ENCODE measurements at regions of chrX and their contacts with region 1.

Region 1: DNA sequence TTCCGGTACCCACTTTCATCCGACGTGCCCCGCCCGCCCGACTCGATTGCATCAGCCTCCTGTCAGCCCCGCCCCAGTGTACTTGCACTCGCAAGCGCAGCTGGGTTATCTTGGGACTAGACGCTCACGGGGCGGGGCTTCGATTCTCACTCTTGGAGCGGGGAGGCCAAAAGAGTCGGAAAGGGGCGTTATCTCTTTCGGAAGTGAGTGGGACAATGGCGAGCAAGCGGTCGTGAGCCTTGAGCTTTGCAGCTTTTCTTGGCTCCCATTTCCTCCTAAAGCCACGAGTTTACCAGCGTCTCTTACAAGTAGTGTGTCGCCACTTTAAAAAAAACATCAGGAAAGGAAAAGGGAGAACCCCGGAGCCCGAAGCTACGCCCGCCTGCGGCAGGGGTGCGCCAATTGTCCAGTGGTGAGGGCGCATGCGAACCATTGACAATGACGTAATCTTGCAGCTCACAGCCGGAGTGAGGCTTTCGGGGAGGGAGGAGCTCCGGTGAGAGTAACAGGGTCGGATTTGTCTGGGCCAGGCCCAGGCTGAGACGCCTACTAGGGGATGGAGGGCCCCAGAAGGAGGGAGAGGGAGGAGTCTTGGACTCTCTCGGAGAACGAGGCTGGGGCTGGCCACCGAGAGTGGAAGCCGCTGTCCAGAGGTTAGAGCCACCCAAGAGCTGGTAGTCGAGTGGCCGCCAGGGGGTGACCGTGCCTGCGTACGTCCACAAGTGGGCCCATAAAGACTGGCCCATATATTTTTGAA is 109.5 kb downstream of the GNL3L start:
- DNase-seq: peak; percentile 95

Region 2: GRCh38 chrX:54999717-55000598 is 360.4 kb after region 1 on chrX and contains the start of gene APEX2:
- intact Hi-C with region 1: loop called (anchors 5 kb)
- DNase-seq: peak; percentile 95
- total RNA-seq, gene APEX2: 8.4 TPM

Measured in cardiac septum (tissue), 1 donor.